ENCODE measurements at regions of chr15 and their contacts with region 1.

Region 1: GRCh38 chr15:69394556-69395282 is 19.4 kb upstream of the KIF23 start:
- DNase-seq: peak; percentile 81 to 91 (median 86)
- ATAC-seq: peak; percentile 96
- H3K4me3 ChIP-seq: no peak overlapping the region
- H3K27ac ChIP-seq: no peak overlapping the region
- H3K4me1 ChIP-seq: peaks cover 0 to 8% of the 10 kb centered on the region in 2 experiments; a peak in 3 of 5 replicates
- H3K27me3 ChIP-seq: peaks cover 9 to 61% of the 10 kb centered on the region in 2 experiments; a peak in 4 of 5 replicates
- CTCF ChIP-seq: peak; percentile 87 to 90 (median 88)
- EP300 ChIP-seq: no peak
- POLR2A ChIP-seq: no peak
- RAD21 ChIP-seq: peak; percentile 77 to 86

Region 2: DNA sequence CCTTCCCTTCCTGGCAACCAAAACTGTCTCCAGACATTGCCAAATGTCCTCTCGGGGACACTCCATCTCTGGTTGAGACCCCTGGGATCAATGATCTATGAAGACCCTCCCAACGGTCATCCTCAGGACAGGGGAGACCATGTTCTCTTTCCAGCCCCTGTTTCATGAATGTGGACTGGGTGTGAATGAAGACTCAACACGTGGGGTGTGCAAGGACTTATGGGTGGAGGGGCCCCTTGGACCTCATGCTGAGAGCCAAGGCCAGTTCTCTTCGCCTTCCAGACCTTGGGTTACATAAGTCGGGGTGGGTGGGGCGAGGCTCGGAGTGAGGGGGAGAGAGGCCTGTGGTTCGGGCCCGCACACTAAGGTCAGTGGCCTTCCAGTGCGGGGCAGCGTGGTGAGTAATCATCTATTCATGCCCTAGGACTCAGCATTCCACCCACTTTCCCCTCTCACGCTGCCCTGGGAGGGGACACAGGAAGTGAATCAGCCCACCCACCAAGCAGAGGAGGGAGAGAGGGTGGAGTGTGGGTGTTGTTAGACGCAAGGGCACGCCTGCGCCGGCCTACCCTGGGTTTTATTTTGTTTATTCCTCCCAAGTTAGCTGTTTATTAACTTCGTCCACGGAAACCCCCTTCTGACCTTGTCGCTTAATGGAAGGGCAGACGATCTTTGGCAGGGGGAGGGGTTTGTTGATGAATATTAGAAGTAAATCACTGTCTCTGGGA is 89.4 kb before region 1 on chr15:
- CTCF ChIA-PET with region 1: no interaction called
- POLR2A ChIA-PET with region 1: no interaction called
- in situ Hi-C with region 1: no loop called
- intact Hi-C with region 1: loop called (anchors 10 kb)
- DNase-seq: peak; percentile 56 to 66 (median 61)
- ATAC-seq: peak; percentile 66
- H3K4me3 ChIP-seq: no peak overlapping the region
- H3K27ac ChIP-seq: no peak overlapping the region
- H3K4me1 ChIP-seq: peaks cover 0 to 7% of the 10 kb centered on the region in 2 experiments; a peak in 2 of 5 replicates
- H3K27me3 ChIP-seq: peaks cover 5 to 21% of the 10 kb centered on the region in 2 experiments; a peak in 4 of 5 replicates
- CTCF ChIP-seq: no peak
- EP300 ChIP-seq: no peak
- POLR2A ChIP-seq: no peak
- RAD21 ChIP-seq: no peak

Region 3: GRCh38 chr15:69834761-69835160 is 440.0 kb after region 1 on chr15:
- CTCF ChIA-PET with region 1: no interaction called
- POLR2A ChIA-PET with region 1: no interaction called
- in situ Hi-C with region 1: no loop called
- intact Hi-C with region 1: no loop called
- DNase-seq: no peak
- ATAC-seq: no peak
- H3K4me3 ChIP-seq: no peak overlapping the region
- H3K27ac ChIP-seq: no peak overlapping the region
- H3K4me1 ChIP-seq: no peaks in the 10 kb centered on the region
- H3K27me3 ChIP-seq: no peaks in the 10 kb centered on the region; a peak in 2 of 5 replicates
- CTCF ChIP-seq: no peak
- EP300 ChIP-seq: no peak
- POLR2A ChIP-seq: no peak
- RAD21 ChIP-seq: no peak

Region 4: DNA sequence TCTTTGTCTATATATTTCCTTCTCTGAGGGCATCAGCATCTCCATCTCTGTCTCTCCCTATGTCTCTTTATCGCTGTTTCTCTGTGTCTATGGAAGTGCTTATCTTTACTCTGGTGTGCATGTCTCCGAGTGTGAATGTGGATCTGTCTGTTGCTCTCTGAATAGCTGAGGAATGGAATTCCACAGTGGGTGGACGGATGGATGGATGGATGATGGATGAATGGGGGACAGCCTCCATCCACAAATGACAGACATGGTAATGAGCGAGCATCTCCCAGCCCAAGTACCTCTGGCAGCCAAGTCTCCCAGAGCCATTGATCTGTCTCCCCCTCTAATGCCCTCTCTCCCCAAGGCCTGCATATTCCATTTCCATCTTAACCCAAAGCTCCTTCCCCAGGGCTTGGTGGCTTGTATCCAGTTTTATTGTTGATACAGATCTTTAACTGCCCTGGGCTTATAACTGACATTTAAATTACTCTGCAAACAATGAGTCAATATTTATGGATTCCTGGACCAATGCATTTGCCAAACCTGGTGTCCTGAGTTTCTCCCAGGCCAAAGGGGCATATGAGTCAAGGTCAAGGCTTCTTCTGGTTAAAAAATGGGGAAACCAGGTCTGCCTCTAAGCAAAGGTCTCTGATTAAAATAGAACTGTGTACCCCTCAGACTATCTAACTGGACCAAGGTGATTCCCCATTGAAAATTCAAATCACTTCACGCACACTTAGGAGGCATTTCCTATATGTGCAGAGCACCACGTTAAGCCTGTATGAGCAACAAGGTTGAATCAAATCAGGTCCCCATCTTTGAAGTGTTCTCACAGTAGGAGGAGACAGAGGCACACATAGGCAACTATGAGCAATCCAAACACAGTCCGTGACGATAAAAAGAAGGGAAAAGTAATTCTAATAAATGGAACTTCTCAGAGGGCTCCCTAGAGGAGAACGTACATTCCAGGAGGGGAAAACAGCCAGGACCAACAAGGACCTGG is 593.1 kb after region 1 on chr15:
- CTCF ChIA-PET with region 1: no interaction called
- POLR2A ChIA-PET with region 1: no interaction called
- in situ Hi-C with region 1: no loop called
- intact Hi-C with region 1: no loop called
- DNase-seq: no peak
- ATAC-seq: no peak
- H3K4me3 ChIP-seq: no peak overlapping the region
- H3K27ac ChIP-seq: no peak overlapping the region
- H3K4me1 ChIP-seq: no peaks in the 10 kb centered on the region
- H3K27me3 ChIP-seq: peaks cover 2 to 40% of the 10 kb centered on the region in 2 experiments; a peak in 4 of 5 replicates
- CTCF ChIP-seq: no peak
- EP300 ChIP-seq: no peak
- POLR2A ChIP-seq: no peak
- RAD21 ChIP-seq: no peak

Measured in K562 (cell line).